ENCODE measurements at regions of chr3 and their contacts with region 1.

Region 1: DNA sequence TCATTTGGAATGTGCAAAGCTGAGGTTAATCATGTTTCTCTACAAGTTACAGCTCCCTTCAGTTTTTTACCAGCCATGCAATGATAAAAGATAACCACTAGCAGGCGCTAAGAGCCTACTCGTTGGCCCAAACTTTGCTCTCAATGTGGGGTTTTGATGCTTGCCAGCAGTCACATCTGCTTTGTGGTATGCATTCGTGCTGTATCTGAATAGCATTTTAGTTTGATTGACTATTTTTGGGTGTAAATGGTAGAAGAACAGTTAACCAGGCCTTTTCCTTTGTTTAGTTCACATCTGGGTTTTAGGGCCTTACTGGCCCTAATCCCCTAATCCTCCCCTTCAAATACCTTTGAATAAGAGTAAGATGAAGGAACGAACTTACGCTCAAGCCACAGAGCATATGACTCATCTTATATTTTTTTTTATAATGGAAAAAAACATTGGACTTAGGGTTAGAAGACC is 4.4 kb upstream of the CLDN11 start:
- DNase-seq: peak in 4 of 10 donors; percentile 40 to 88 (median 46)

Region 2: DNA sequence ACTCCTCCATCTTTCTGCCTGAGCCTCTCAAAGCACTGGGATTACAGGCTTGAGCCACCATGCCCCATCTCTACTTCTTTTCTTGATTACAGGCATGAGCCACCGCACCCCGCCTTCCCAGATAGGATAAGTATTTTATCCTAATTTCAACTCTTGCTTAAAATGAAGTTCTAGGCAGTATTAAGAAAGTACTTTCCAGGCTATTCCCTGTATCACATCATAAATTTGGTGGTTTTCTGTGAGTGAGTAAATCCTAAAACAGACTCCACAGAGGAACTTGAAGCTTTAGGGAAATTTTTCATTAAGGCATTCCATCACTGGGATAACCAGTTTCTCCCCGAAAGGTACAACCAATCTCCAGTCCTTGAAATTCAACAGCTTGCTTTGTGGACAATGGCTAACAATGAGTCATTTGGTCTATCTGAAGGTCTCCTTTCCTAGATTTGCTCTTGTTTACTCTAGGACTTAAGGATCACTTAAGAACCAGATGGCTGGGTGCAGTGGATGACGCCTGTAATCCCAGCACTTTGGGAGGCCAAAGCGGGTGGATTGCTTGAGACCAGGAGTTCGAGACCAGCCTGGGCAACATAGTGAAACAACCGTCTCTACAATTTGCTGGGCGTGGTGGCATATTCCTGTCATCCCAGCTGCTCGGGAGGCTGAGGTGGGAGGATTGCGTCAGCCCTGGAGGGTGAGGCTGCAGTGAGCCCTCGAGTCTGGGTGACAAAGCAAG is 106.4 kb before region 1 on chr3:
- intact Hi-C with region 1: loop called (anchors 2 kb)
- DNase-seq: no peak

Region 3: GRCh38 chr3:170440346-170440745 is 26.1 kb after region 1 on chr3:
- intact Hi-C with region 1: no loop called
- DNase-seq: no peak

Region 4: GRCh38 chr3:170483485-170484262 is 69.4 kb after region 1 on chr3:
- intact Hi-C with region 1: no loop called
- DNase-seq: no peak

Region 5: DNA sequence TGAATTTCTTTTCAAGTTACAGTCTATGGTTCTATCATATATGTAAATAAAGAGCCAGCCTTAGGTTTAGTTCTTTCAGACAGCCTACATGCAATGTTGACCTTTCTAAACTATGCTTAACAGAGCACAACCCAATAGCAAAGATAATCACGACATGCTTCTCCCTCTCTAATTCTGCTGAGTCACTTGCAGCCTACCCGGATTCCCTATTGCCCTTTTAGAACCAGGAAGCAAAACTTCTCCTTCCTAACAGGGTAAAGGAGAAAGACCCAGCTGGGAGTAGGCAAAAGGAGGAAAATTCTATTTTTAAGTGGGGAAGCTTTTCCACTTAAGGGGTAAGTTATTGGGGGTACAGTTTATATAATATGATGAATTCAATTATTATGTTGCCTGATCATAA is 92.3 kb after region 1 on chr3:
- intact Hi-C with region 1: no loop called
- DNase-seq: no peak

Region 6: DNA sequence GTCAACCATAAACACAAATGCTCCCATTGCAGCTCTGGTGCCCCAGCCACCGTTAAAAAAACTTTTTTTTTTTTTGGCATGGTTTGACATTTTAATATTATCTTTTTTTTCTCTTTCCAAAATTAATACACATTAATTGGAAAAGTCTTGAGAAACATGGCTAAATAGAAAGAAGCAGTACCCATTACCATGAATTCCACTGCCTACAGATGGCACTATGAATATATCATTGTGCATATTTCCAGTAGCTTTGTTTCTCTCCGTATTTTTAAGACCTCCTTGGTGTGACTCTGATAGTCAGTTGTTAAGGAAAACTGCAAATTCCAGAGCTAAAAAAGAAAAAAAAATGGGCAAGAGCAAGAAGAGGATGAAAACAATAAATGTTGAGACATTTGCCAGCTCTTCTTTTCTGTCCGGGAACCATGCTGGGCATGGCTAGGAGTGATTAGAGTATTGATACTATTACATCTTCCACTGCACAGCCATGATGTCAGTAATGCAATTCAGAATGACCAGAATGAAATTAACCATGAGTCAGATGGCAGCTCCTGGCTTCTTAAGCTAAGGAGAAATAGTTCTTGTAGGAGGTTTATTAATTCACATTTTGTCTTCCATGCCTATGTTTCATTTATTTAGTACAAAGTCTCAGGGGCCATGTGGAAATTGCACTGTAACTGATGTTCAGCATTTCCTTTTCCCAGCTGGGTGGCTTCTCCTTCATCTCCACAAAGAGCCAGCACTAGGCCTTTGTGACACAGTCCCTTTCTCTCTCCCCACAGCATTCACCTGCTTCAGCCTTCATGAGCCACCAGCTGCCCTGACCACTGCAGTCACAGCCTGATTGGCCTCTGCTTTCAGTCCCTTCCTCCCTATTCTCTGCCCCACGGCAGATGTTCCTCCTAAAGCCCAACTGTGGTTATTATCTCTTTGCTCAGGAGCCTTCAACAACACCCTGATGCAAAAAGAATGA is 139.8 kb after region 1 on chr3:
- intact Hi-C with region 1: loop called (anchors 5 kb)
- DNase-seq: no peak

Region 7: DNA sequence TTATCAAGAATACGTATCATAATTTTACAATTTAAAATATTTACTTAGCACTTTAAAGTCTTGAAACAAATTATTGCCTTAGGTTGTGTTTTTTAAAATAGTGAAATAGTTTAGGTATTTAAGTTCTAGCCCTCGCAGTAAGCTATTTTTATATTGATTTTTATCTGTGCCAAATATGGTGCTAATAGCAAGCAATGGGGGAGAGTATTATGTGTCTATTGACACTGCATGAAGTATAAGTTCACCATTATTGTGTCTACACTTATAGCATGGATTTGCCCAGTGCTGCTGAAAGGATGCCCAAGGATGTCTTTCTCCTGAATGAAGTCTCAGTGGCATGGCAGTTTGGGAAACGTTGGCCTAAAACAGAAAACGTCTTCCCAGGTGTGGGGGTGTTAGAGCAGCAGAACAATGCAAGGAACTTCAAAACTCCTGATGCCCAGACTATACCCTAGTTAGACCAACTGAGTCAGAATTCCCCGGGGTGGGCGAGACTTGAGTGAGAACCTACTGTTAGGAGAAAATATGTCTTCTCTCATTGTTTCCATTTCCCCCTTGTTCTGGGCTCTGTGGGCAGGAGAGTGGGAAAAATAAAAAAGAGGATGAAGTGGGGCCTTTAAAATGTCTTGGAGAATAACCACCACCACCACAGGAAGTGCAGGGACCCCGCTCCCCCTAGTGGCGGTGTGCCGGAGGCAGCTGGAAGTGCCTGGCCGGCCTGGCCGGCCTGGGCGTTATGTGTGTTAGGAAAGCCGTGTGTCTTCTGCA is 275.8 kb after region 1 on chr3:
- intact Hi-C with region 1: loop called (anchors 2 kb)
- DNase-seq: peak; percentile 61 to 97 (median 77)